Activated CD8-positive, alpha-beta T cell treated with anti-CD3 and anti-CD28 coated beads, Interleukin-2, amount 10 ng/mL, durations not matched to agents 7 days and 5 days (primary cell): ENCODE measurements at regions of chr3 and their contacts with region 1.

Region 1: GRCh38 chr3:183085634-183086390 is 13.5 kb downstream of the MCCC1 start:
- DNase-seq: peak; percentile 38
- ATAC-seq: no peak
- H3K4me3 Mint-ChIP-seq: no peak overlapping the region
- H3K27ac Mint-ChIP-seq: no peak overlapping the region
- H3K4me1 Mint-ChIP-seq: peaks cover 9% of the 10 kb centered on the region
- H3K27me3 Mint-ChIP-seq: no peaks in the 10 kb centered on the region

Region 2: GRCh38 chr3:183069086-183069485 is 16.7 kb before region 1 on chr3:
- CTCF ChIA-PET with region 1: interaction called, 10 read pairs
- POLR2A ChIA-PET with region 1: no interaction called
- DNase-seq: no peak
- ATAC-seq: no peak
- H3K4me3 Mint-ChIP-seq: no peak overlapping the region
- H3K27ac Mint-ChIP-seq: no peak overlapping the region
- H3K4me1 Mint-ChIP-seq: peaks cover 4% of the 10 kb centered on the region
- H3K27me3 Mint-ChIP-seq: no peaks in the 10 kb centered on the region

Region 3: GRCh38 chr3:183099026-183099837 is 13.4 kb after region 1 on chr3 and contains the start of gene MCCC1:
- CTCF ChIA-PET with region 1: interaction called, 41 read pairs
- POLR2A ChIA-PET with region 1: no interaction called
- DNase-seq: peak; percentile 99
- ATAC-seq: peak; percentile 99
- H3K4me3 Mint-ChIP-seq: peak within 1 kb of the TSS; percentile 92
- H3K27ac Mint-ChIP-seq: peak within 1 kb of the TSS; percentile 97
- H3K4me1 Mint-ChIP-seq: peaks cover 25% of the 10 kb centered on the region
- H3K27me3 Mint-ChIP-seq: no peaks in the 10 kb centered on the region
- total RNA-seq, gene MCCC1: 30.1 to 32.7 TPM